GM12878 (cell line): ENCODE measurements at regions of chr2 and their contacts with region 1.

Region 1: DNA sequence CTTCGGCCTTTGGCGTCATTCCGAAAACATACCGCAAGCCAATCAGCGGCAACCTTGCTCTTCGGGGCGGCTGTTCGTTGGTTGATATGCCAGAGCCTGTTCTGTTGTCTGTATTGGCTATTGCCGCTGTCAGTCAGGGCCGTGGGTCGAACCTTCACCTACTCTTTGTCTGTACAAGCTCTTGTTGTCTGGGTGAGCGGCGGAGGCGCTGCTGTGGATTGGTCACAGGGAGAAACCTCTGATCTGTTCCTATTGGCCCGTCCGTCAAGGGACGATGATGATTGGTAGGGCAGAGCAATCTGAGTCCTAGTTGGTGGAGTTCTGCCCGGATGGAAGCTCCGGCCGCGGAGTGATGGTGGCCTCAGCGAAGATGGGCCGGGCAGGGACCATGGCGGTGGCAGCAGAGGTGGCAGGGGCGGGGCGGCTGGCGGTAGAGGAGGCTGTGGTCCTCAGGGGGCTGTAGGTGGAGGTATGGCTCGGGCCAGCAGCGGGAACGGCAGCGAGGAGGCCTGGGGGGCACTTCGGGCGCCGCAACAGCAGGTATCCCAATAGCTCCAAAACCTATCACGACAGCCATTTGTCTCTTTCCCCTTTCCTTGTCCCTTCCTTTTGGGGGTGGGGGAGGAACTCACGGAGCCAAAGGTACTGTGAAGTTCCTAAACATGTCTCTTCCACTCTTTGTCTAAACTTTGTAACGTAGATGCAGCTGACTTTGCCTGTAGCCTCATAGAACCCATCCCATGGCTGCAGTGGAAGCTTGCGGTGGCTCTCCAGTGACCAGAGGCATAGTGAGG is at the start of gene WBP1:
- DNase-seq: peak; percentile 100
- ATAC-seq: peak; percentile 90
- H3K4me3 ChIP-seq: peak within 1 kb of the TSS; percentile 99
- H3K27ac ChIP-seq: peak within 1 kb of the TSS; percentile 96
- H3K4me1 ChIP-seq: peaks cover 19% of the 10 kb centered on the region
- H3K27me3 ChIP-seq: no peaks in the 10 kb centered on the region
- CTCF ChIP-seq: no peak
- EP300 ChIP-seq: no peak
- POLR2A ChIP-seq: peak; percentile 68
- RAD21 ChIP-seq: no peak
- polyA plus RNA-seq, gene WBP1: 4.2 to 11.5 TPM

Region 2: GRCh38 chr2:74379851-74380789 is 78.2 kb before region 1 on chr2 and contains the start of gene DCTN1:
- CTCF ChIA-PET with region 1: no interaction called
- POLR2A ChIA-PET with region 1: no interaction called
- RAD21 ChIA-PET with region 1: no interaction called
- SMC1A ChIA-PET with region 1: no interaction called
- in situ Hi-C with region 1: no loop called
- intact Hi-C with region 1: no loop called
- DNase-seq: no peak
- ATAC-seq: peak; percentile 83
- H3K4me3 ChIP-seq: no peak within 1 kb of the TSS
- H3K27ac ChIP-seq: no peak within 1 kb of the TSS
- H3K4me1 ChIP-seq: no peaks in the 10 kb centered on the region; the same call in 1 of the 2 replicates
- H3K27me3 ChIP-seq: no peaks in the 10 kb centered on the region
- CTCF ChIP-seq: no peak
- EP300 ChIP-seq: no peak
- POLR2A ChIP-seq: no peak
- RAD21 ChIP-seq: no peak
- polyA plus RNA-seq, gene DCTN1: 44.1 to 55.6 TPM

Region 3: DNA sequence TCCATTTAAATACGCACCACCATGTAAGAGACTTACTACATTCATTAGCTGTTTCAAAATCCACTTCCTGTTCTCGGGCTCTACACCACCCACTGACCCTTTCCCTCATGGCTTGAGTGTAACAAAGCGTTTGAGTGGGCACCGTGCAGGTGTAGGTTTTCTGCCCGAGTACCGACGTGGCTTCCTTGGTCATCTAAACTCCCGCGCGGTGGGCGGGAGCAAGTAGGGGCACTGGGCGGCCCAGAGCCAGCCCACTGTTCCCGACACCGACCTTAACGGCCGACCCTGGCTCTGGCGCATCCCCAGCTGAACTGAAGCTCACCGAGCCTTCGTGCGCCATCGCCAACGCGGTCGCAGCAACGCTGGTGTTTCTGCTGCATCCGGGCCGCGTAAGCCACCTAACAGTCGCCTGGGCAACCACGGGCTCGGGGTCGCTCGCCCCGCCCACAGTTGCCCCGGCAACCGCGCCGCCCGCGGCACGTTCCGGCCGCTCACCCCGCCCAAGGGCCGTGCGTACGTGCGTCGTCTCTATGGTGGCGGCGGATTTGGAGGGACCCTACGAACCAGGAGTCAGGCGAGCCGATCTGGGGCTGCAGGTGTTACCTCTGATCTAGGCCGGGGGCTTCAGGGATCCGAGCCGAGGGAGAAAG is 37.0 kb before region 1 on chr2 and contains the starts of genes C2orf81 and WDR54:
- CTCF ChIA-PET with region 1: interaction called, 6 read pairs
- POLR2A ChIA-PET with region 1: interaction called, 6 read pairs
- RAD21 ChIA-PET with region 1: interaction called, 11 read pairs
- SMC1A ChIA-PET with region 1: interaction called, 24 read pairs
- in situ Hi-C with region 1: no loop called
- intact Hi-C with region 1: loop called (anchors 2 kb)
- DNase-seq: peak; percentile 84
- ATAC-seq: peak; percentile 96
- H3K4me3 ChIP-seq: peak within 1 kb of the TSS; percentile 78
- H3K27ac ChIP-seq: peak within 1 kb of the TSS; percentile 80
- H3K4me1 ChIP-seq: peaks cover 22% of the 10 kb centered on the region
- H3K27me3 ChIP-seq: no peaks in the 10 kb centered on the region
- CTCF ChIP-seq: no peak
- EP300 ChIP-seq: no peak
- POLR2A ChIP-seq: peak; percentile 98
- RAD21 ChIP-seq: no peak
- polyA plus RNA-seq, gene C2orf81: 0.10 to 0.27 TPM
- polyA plus RNA-seq, gene WDR54: 88.7 to 89.5 TPM

Region 4: GRCh38 chr2:74472086-74472944 is 14.0 kb after region 1 on chr2 and contains the start of gene MRPL53:
- CTCF ChIA-PET with region 1: interaction called, 10 read pairs
- POLR2A ChIA-PET with region 1: interaction called, 14 read pairs
- RAD21 ChIA-PET with region 1: interaction called, 4 read pairs
- SMC1A ChIA-PET with region 1: interaction called, 9 read pairs
- in situ Hi-C with region 1: no loop called
- intact Hi-C with region 1: no loop called
- DNase-seq: peak; percentile 86
- ATAC-seq: peak; percentile 94
- H3K4me3 ChIP-seq: peak within 1 kb of the TSS; percentile 89
- H3K27ac ChIP-seq: peak within 1 kb of the TSS; percentile 93
- H3K4me1 ChIP-seq: 0 out of 2 replicates have a peak, but pooled peaks cover 6% of the 10 kb centered on the region
- H3K27me3 ChIP-seq: no peaks in the 10 kb centered on the region
- CTCF ChIP-seq: no peak
- EP300 ChIP-seq: no peak
- POLR2A ChIP-seq: peak; percentile 98
- RAD21 ChIP-seq: no peak
- polyA plus RNA-seq, gene MRPL53: 40.8 to 94.1 TPM

Region 5: DNA sequence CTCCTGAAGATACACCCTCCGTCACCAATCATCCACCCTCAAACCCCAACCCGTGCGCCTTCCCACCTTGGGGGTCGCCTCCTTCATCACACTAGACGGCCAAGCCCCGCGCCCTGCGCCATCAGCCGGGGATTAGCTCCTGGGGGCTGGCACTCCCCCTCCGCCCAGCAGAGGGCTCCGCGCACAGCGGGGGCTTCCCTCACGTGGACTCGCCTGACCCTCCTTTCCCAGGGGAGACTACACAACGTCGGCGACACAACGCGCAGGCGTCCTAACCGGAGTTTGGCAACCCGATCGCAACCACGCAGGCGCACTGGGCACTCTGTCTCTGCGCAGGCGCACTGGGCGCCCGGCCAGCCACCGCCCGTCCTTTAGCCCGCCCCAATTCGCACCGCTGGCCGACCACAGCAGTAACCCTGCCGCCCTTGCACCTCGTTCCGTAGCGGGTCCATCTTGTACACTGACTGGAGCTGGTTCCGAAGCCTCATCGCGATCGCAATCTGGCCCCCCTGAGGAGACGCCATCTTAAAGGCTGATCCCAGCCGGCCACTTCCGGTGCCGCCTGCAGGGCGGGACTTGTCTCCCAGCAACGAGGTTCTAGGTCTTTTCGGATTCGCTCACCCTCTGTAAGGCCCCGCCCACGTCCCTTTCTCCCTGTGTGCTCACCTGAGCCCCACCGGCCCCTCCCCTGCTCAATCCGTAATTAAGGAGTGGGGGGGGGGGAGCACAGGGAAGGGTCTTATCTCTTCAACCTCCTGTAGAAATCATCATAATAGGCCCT is 49.0 kb after region 1 on chr2 and contains the start of gene PCGF1:
- CTCF ChIA-PET with region 1: interaction called, 9 read pairs
- POLR2A ChIA-PET with region 1: interaction called, 5 read pairs
- RAD21 ChIA-PET with region 1: interaction called, 10 read pairs
- SMC1A ChIA-PET with region 1: no interaction called
- in situ Hi-C with region 1: no loop called
- intact Hi-C with region 1: no loop called
- DNase-seq: peak; percentile 95
- ATAC-seq: peak; percentile 89
- H3K4me3 ChIP-seq: peak within 1 kb of the TSS; percentile 98
- H3K27ac ChIP-seq: peak within 1 kb of the TSS; percentile 97
- H3K4me1 ChIP-seq: peaks cover 27% of the 10 kb centered on the region
- H3K27me3 ChIP-seq: peaks cover 0 to under 1% of the 10 kb centered on the region in 2 experiments; a peak in 1 of 4 replicates
- CTCF ChIP-seq: peak; percentile 64 to 75 (median 71)
- EP300 ChIP-seq: no peak; a peak in 1 of 4 replicates
- POLR2A ChIP-seq: peak; percentile 94
- RAD21 ChIP-seq: peak; percentile 49
- polyA plus RNA-seq, gene PCGF1: 42.5 to 50.8 TPM